Endothelial cell of umbilical vein (primary cell): ENCODE measurements at regions of chr2 and their contacts with region 1.

Region 1: GRCh38 chr2:120765678-120766395 is 30.2 kb downstream of the GLI2 start:
- DNase-seq: peak; percentile 28
- H3K4me3 ChIP-seq: no peak overlapping the region
- H3K27ac ChIP-seq: peak overlapping the region; percentile 43
- H3K4me1 ChIP-seq: peaks cover 15% of the 10 kb centered on the region
- H3K27me3 ChIP-seq: no peaks in the 10 kb centered on the region
- CTCF ChIP-seq: no peak
- POLR2A ChIP-seq: no peak

Region 2: DNA sequence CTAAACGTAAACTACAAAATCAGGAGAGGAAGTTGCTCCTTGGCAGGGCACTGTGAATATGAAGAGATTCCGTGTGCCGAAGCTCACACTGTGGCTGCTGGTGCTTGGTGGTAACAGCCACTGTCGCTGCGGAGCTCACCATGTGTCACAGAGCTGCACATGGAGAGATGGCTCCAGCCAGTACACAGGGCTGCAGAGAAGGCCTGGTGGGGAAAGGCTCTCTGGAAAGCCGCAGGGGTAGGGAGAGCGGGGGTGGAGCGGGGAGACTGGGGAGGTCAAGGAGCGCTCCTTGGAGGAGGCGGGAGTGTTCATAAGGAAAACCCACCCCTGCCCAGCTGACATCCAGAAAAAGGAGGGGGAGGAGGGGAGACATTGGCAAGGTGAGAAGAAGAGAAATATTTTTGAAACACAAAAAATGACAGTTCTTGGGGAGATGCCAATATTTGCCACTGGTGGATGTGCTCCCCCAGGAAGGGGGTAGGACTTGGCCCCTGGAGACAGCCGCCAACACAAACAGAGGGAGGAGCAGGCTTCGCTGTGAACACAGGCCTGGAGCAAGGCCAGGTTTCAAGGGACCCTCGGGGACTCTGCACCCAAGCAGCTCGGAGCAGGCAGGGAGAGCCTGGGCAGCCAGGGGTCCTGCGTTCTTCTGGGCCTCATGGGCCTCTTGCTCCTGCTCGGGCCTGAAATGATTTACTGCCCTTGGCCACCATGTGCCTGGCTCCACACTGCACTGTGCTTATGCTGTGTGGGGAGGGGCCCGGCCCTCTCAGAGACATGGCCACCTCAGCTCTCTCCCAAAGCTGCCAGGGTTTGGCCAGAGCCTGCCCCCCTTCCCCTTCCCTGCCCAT is 132.8 kb before region 1 on chr2:
- CTCF ChIA-PET with region 1: no interaction called
- POLR2A ChIA-PET with region 1: no interaction called
- dilution Hi-C with region 1: no loop called
- intact Hi-C with region 1: no loop called
- DNase-seq: no peak
- H3K4me3 ChIP-seq: no peak overlapping the region
- H3K27ac ChIP-seq: no peak overlapping the region
- H3K4me1 ChIP-seq: no peaks in the 10 kb centered on the region
- H3K27me3 ChIP-seq: peaks cover 2 to 5% of the 10 kb centered on the region in 2 experiments
- CTCF ChIP-seq: no peak
- POLR2A ChIP-seq: no peak

Region 3: GRCh38 chr2:120703330-120703994 is 62.4 kb before region 1 on chr2:
- CTCF ChIA-PET with region 1: no interaction called
- POLR2A ChIA-PET with region 1: no interaction called
- dilution Hi-C with region 1: no loop called
- intact Hi-C with region 1: loop called (anchors 5 kb)
- DNase-seq: peak; percentile 61
- H3K4me3 ChIP-seq: no peak overlapping the region
- H3K27ac ChIP-seq: no peak overlapping the region
- H3K4me1 ChIP-seq: peaks cover 4% of the 10 kb centered on the region
- H3K27me3 ChIP-seq: peaks cover 2 to 5% of the 10 kb centered on the region in 2 experiments
- CTCF ChIP-seq: no peak
- POLR2A ChIP-seq: no peak

Region 4: DNA sequence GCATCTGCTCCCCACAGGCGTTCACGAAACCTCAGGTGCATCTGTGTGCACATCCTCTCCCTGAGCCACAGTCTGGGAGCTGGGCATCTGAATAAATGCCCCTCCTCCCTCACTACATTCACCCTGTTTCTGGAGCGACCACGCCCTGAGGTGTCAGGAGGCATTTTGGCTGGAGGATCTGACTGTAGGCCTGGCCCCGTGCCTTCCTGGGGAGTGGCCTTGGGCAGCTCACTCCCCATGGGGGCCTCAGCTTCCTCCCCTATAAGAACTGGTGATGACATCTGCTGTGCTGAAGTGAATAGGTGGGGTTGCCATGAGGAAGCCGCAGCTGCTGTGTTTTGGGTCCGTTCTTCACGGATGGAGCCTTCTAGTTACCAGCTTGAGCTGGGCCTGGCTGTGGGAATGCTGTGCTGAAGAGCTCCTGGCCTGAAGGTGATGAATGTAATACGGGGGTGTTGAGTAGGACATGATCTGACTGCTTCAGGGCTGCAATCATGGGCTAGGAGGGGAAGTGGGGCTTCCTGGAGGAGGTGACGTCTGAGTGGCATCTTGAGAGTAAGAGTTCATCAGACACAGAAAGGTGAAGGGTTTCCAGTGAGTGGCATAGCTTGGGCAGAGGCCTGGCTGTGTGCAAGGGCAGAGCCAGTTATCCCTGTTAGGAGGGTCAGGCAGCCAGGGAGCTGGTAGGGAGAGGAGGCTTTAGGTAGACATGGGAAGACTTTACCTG is 28.0 kb after region 1 on chr2:
- CTCF ChIA-PET with region 1: no interaction called
- POLR2A ChIA-PET with region 1: no interaction called
- dilution Hi-C with region 1: no loop called
- intact Hi-C with region 1: no loop called
- DNase-seq: no peak
- H3K4me3 ChIP-seq: no peak overlapping the region
- H3K27ac ChIP-seq: no peak overlapping the region
- H3K4me1 ChIP-seq: no peaks in the 10 kb centered on the region
- H3K27me3 ChIP-seq: no peaks in the 10 kb centered on the region
- CTCF ChIP-seq: no peak
- POLR2A ChIP-seq: no peak